ENCODE measurements at regions of chr2 and their contacts with region 1.

Region 1: GRCh38 chr2:191637182-191638078 is 40.5 kb upstream of the NABP1 start:
- DNase-seq: peak; percentile 95
- ATAC-seq: peak; percentile 80
- H3K4me3 ChIP-seq: peak overlapping the region; percentile 60
- H3K27ac ChIP-seq: peak overlapping the region; percentile 99
- H3K4me1 ChIP-seq: peaks cover 64% of the 10 kb centered on the region
- H3K27me3 ChIP-seq: no peaks in the 10 kb centered on the region
- CTCF ChIP-seq: no peak

Region 2: DNA sequence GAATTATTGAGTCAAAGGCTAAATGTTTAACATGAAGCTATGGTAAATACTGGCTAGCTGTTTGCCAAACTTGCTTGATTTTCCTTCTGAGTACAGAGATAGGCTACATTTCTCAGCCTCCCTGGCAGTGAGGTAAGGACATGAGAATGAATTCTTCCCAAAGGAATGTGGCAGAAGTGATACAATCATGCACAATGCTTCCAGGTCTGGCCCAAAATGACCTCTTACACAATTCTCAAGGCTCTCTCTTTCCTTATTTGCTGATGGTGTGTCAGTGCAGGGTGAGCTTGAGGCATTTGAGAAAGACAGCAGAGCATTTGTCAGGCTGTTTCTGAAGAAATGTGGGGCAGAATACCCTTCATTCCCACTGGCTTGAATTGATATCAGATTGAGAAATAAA is 55.1 kb before region 1 on chr2:
- CTCF ChIA-PET with region 1: no interaction called
- POLR2A ChIA-PET with region 1: no interaction called
- intact Hi-C with region 1: loop called (anchors 1 kb)
- DNase-seq: peak; percentile 96
- ATAC-seq: peak; percentile 93
- H3K4me3 ChIP-seq: peak overlapping the region; percentile 34; the same call in 1 of the 2 replicates
- H3K27ac ChIP-seq: peak overlapping the region; percentile 84
- H3K4me1 ChIP-seq: peaks cover 34% of the 10 kb centered on the region
- H3K27me3 ChIP-seq: no peaks in the 10 kb centered on the region
- CTCF ChIP-seq: no peak

Region 3: DNA sequence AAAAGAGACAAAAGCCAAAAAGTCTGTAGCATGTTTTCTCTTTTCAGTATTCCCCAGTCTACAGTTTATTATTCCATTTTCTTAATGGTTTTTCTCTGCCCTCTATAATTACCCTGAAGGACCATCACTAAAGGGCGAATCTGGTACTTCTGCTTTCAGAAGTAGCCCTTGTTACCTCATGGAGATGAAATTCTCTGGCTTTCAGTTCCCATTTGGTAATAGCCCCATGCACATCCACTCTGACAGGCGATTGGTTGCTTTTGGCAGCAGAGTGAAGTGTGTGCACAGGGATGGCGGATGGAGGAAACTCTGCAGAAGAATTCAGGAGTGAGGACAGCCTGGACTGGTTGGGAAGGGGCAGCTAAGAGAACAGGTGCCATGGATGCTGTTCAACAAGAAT is 25.8 kb before region 1 on chr2:
- CTCF ChIA-PET with region 1: no interaction called
- POLR2A ChIA-PET with region 1: no interaction called
- intact Hi-C with region 1: no loop called
- DNase-seq: no peak
- ATAC-seq: no peak
- H3K4me3 ChIP-seq: no peak overlapping the region
- H3K27ac ChIP-seq: peak overlapping the region; percentile 55
- H3K4me1 ChIP-seq: peaks cover 17% of the 10 kb centered on the region
- H3K27me3 ChIP-seq: no peaks in the 10 kb centered on the region
- CTCF ChIP-seq: no peak

Region 4: GRCh38 chr2:191691016-191691735 is 53.7 kb after region 1 on chr2:
- CTCF ChIA-PET with region 1: interaction called, 4 read pairs
- POLR2A ChIA-PET with region 1: interaction called, 7 read pairs
- intact Hi-C with region 1: loop called (anchors 1 kb)
- DNase-seq: peak; percentile 92
- ATAC-seq: peak; percentile 45
- H3K4me3 ChIP-seq: no peak overlapping the region
- H3K27ac ChIP-seq: peak overlapping the region; percentile 26
- H3K4me1 ChIP-seq: peaks cover 49% of the 10 kb centered on the region
- H3K27me3 ChIP-seq: no peaks in the 10 kb centered on the region
- CTCF ChIP-seq: peak; percentile 93

Region 5: GRCh38 chr2:191728750-191729624 is 91.6 kb after region 1 on chr2:
- CTCF ChIA-PET with region 1: no interaction called
- POLR2A ChIA-PET with region 1: no interaction called
- intact Hi-C with region 1: no loop called
- DNase-seq: peak; percentile 44
- ATAC-seq: peak; percentile 78
- H3K4me3 ChIP-seq: no peak overlapping the region
- H3K27ac ChIP-seq: no peak overlapping the region
- H3K4me1 ChIP-seq: peaks cover 8% of the 10 kb centered on the region
- H3K27me3 ChIP-seq: no peaks in the 10 kb centered on the region
- CTCF ChIP-seq: peak; percentile 32

Region 6: GRCh38 chr2:191748059-191748461 is 110.6 kb after region 1 on chr2:
- CTCF ChIA-PET with region 1: no interaction called
- POLR2A ChIA-PET with region 1: no interaction called
- intact Hi-C with region 1: no loop called
- DNase-seq: no peak
- ATAC-seq: no peak
- H3K4me3 ChIP-seq: no peak overlapping the region
- H3K27ac ChIP-seq: no peak overlapping the region
- H3K4me1 ChIP-seq: no peaks in the 10 kb centered on the region
- H3K27me3 ChIP-seq: no peaks in the 10 kb centered on the region
- CTCF ChIP-seq: no peak

Measured in PC-3 (cell line).